B cell (primary cell): ENCODE measurements at regions of chr20 and their contacts with region 1.

Region 1: GRCh38 chr20:25390538-25391528 is at the start of gene ABHD12:
- DNase-seq: peak; percentile 94
- ATAC-seq: peak; percentile 91
- H3K4me3 ChIP-seq: peak within 1 kb of the TSS; percentile 66 to 85 (median 72)
- H3K4me3 Mint-ChIP-seq: peak within 1 kb of the TSS; percentile 93
- H3K27ac ChIP-seq: peak within 1 kb of the TSS; percentile 8 to 58
- H3K27ac Mint-ChIP-seq: peak within 1 kb of the TSS; percentile 90
- H3K4me1 ChIP-seq: peaks cover 6 to 7% of the 10 kb centered on the region in 2 donors
- H3K4me1 Mint-ChIP-seq: peaks cover 20% of the 10 kb centered on the region
- H3K27me3 ChIP-seq: no peaks in the 10 kb centered on the region
- H3K27me3 Mint-ChIP-seq: no peaks in the 10 kb centered on the region
- CTCF ChIP-seq: no peak
- total RNA-seq, gene ABHD12: 27.7 and 28.3 TPM in 2 replicates

Region 2: GRCh38 chr20:24992487-24993205 is 398.2 kb before region 1 on chr20 and contains the start of gene APMAP:
- CTCF ChIA-PET with region 1: interaction called, 5 read pairs
- POLR2A ChIA-PET with region 1: no interaction called
- intact Hi-C with region 1: loop called (anchors 1 kb)
- DNase-seq: peak; percentile 97
- ATAC-seq: peak; percentile 91
- H3K4me3 ChIP-seq: peak within 1 kb of the TSS; percentile 73 to 96 (median 84)
- H3K4me3 Mint-ChIP-seq: peak within 1 kb of the TSS; percentile 96
- H3K27ac ChIP-seq: peak within 1 kb of the TSS; percentile 93 to 98
- H3K27ac Mint-ChIP-seq: peak within 1 kb of the TSS; percentile 97
- H3K4me1 ChIP-seq: peaks cover 15 to 29% of the 10 kb centered on the region in 2 donors
- H3K4me1 Mint-ChIP-seq: peaks cover 46% of the 10 kb centered on the region
- H3K27me3 ChIP-seq: no peaks in the 10 kb centered on the region
- H3K27me3 Mint-ChIP-seq: no peaks in the 10 kb centered on the region
- CTCF ChIP-seq: no peak
- total RNA-seq, gene APMAP: 28.0 and 28.2 TPM in 2 replicates

Region 3: DNA sequence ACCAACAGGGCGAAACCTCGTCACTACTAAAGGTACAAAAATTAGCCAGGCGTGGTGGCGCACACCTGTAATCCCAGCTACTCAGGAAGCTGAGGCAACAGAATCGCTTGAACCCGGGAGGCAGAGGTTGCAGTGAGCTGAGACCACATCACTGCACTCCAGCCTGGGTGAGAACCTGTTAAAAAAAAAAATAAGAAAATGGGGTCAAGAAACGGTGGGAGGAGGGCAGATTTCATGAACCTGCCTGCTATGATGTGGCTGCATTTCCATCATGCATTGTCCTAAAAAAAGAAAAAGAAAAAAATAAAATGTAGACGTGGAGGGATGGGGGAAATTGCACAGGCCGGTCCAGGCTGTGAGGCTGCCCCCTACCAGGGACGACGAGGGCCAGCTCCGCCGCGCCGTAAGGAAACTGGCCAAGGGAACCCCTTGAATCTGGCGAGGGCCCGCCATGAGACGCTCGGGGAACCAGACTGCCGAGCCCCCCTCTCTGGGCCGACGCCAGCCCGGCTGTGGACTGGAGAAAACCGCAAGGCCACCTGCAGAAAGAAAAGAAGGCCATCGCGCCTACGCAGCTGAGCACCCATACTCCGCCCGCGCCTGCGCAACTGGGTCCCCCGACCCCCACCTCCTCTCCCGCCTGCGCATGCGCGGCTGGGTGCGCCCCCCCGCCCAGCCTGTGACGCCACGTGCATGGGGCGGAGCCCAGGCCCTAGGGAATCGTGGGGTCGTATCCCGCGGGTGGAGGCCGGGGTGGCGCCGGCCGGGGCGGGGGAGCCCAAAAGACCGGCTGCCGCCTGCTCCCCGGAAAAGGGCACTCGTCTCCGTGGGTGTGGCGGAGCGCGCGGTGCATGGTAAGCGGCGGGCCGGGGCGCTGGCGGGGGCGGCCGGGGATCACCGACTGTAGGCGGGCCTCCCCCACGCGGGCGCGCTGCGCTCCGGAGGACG is 195.5 kb before region 1 on chr20 and contains the start of gene ENTPD6:
- CTCF ChIA-PET with region 1: no interaction called
- POLR2A ChIA-PET with region 1: no interaction called
- intact Hi-C with region 1: loop called (anchors 1 kb)
- DNase-seq: peak; percentile 95
- ATAC-seq: peak; percentile 85
- H3K4me3 ChIP-seq: peak within 1 kb of the TSS; percentile 55 to 91 (median 88)
- H3K4me3 Mint-ChIP-seq: peak within 1 kb of the TSS; percentile 94
- H3K27ac ChIP-seq: peak within 1 kb of the TSS; percentile 63 to 86
- H3K27ac Mint-ChIP-seq: peak within 1 kb of the TSS; percentile 92
- H3K4me1 ChIP-seq: peaks cover 15 to 24% of the 10 kb centered on the region in 2 donors
- H3K4me1 Mint-ChIP-seq: peaks cover 37% of the 10 kb centered on the region
- H3K27me3 ChIP-seq: no peaks in the 10 kb centered on the region
- H3K27me3 Mint-ChIP-seq: peaks cover 1% of the 10 kb centered on the region
- CTCF ChIP-seq: no peak
- total RNA-seq, gene ENTPD6: 64.4 and 71.3 TPM in 2 replicates

Region 4: DNA sequence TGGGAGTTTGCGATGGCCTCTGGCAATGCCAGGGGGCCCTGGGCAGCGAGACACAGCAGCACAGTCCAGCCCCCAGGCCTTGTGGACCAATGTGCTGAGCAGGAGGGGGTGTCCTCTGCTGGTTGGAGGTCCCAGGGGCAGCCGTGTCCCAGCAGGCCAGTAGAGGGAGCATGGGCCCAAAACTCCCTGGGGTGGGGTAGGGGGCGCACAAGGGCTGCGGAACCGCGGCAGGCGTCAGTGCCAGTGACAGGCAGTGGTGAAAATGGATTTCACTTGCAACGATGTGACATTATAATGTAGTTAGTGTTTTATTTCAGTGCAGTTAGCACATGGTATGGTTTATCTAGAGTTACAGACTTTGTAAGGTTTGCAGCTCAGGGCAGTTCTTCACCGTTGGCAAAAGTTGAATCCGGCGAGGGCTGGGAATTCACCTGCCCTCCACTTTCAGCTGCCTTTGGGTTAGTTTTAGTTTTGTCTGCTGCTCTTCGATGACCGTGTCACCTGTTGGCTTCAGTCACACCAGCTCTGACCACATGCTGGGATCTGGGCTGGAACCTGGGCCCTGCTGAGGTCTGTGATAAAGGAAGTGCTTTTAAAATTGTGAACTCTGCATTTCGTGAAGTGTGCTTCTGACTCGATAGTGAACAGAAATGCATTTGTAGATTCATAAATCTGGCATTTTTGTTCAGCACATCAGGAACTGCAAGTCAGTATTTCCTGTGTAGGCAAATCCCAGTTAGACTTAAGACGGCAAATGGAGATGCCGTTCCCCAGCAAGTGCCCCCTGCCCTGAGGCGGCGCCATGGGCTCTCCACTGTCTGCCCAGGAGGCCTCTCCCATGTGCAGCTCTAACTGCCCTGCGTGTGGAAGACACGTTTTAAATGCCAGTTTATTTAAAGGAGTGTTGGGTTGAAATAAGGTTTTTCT is 96.1 kb before region 1 on chr20:
- CTCF ChIA-PET with region 1: interaction called, 7 read pairs
- POLR2A ChIA-PET with region 1: no interaction called
- intact Hi-C with region 1: loop called (anchors 2 kb)
- DNase-seq: peak; percentile 75
- ATAC-seq: peak; percentile 95
- H3K4me3 ChIP-seq: no peak overlapping the region
- H3K4me3 Mint-ChIP-seq: no peak overlapping the region
- H3K27ac ChIP-seq: no peak overlapping the region
- H3K27ac Mint-ChIP-seq: no peak overlapping the region
- H3K4me1 ChIP-seq: peaks cover 0 to 18% of the 10 kb centered on the region in 2 donors
- H3K4me1 Mint-ChIP-seq: peaks cover 11% of the 10 kb centered on the region
- H3K27me3 ChIP-seq: no peaks in the 10 kb centered on the region
- H3K27me3 Mint-ChIP-seq: no peaks in the 10 kb centered on the region
- CTCF ChIP-seq: peak; percentile 73

Region 5: GRCh38 chr20:25318471-25319240 is 72.2 kb before region 1 on chr20:
- CTCF ChIA-PET with region 1: interaction called, 8 read pairs
- POLR2A ChIA-PET with region 1: interaction called, 4 read pairs
- intact Hi-C with region 1: loop called (anchors 2 kb)
- DNase-seq: peak; percentile 71
- ATAC-seq: peak; percentile 91
- H3K4me3 ChIP-seq: peak overlapping the region in 1 of 5 experiments; percentile 2
- H3K4me3 Mint-ChIP-seq: peak overlapping the region; percentile 67
- H3K27ac ChIP-seq: peak overlapping the region; percentile 23 to 70
- H3K27ac Mint-ChIP-seq: peak overlapping the region; percentile 93
- H3K4me1 ChIP-seq: peaks cover 17 to 29% of the 10 kb centered on the region in 2 donors
- H3K4me1 Mint-ChIP-seq: peaks cover 34% of the 10 kb centered on the region
- H3K27me3 ChIP-seq: no peaks in the 10 kb centered on the region
- H3K27me3 Mint-ChIP-seq: no peaks in the 10 kb centered on the region
- CTCF ChIP-seq: no peak

Region 6: GRCh38 chr20:25525295-25526266 is 134.7 kb after region 1 on chr20:
- CTCF ChIA-PET with region 1: no interaction called
- POLR2A ChIA-PET with region 1: no interaction called
- intact Hi-C with region 1: no loop called
- DNase-seq: no peak
- ATAC-seq: no peak
- H3K4me3 ChIP-seq: no peak overlapping the region
- H3K4me3 Mint-ChIP-seq: no peak overlapping the region
- H3K27ac ChIP-seq: no peak overlapping the region
- H3K27ac Mint-ChIP-seq: no peak overlapping the region
- H3K4me1 ChIP-seq: no peaks in the 10 kb centered on the region
- H3K4me1 Mint-ChIP-seq: no peaks in the 10 kb centered on the region
- H3K27me3 ChIP-seq: no peaks in the 10 kb centered on the region
- H3K27me3 Mint-ChIP-seq: no peaks in the 10 kb centered on the region
- CTCF ChIP-seq: no peak

Region 7: GRCh38 chr20:25623736-25624499 is 233.1 kb after region 1 on chr20 and contains the start of gene NANP:
- CTCF ChIA-PET with region 1: no interaction called
- POLR2A ChIA-PET with region 1: no interaction called
- intact Hi-C with region 1: loop called (anchors 1 kb)
- DNase-seq: peak; percentile 95
- ATAC-seq: peak; percentile 84
- H3K4me3 ChIP-seq: peak within 1 kb of the TSS; percentile 70 to 97 (median 89)
- H3K4me3 Mint-ChIP-seq: peak within 1 kb of the TSS; percentile 98
- H3K27ac ChIP-seq: peak within 1 kb of the TSS; percentile 68 to 90
- H3K27ac Mint-ChIP-seq: peak within 1 kb of the TSS; percentile 98
- H3K4me1 ChIP-seq: peaks cover 18% of the 10 kb centered on the region in 2 donors
- H3K4me1 Mint-ChIP-seq: peaks cover 32% of the 10 kb centered on the region
- H3K27me3 ChIP-seq: no peaks in the 10 kb centered on the region
- H3K27me3 Mint-ChIP-seq: no peaks in the 10 kb centered on the region
- CTCF ChIP-seq: no peak
- total RNA-seq, gene NANP: 1.8 and 2.3 TPM in 2 replicates